Sciatic nerve (tissue), 2 donors: ENCODE measurements at regions of chr1 and their contacts with region 1.

Region 1: GRCh38 chr1:77143529-77144121 is 75.6 kb downstream of the PIGK start:
- DNase-seq: no peak
- ATAC-seq: no peak

Region 2: DNA sequence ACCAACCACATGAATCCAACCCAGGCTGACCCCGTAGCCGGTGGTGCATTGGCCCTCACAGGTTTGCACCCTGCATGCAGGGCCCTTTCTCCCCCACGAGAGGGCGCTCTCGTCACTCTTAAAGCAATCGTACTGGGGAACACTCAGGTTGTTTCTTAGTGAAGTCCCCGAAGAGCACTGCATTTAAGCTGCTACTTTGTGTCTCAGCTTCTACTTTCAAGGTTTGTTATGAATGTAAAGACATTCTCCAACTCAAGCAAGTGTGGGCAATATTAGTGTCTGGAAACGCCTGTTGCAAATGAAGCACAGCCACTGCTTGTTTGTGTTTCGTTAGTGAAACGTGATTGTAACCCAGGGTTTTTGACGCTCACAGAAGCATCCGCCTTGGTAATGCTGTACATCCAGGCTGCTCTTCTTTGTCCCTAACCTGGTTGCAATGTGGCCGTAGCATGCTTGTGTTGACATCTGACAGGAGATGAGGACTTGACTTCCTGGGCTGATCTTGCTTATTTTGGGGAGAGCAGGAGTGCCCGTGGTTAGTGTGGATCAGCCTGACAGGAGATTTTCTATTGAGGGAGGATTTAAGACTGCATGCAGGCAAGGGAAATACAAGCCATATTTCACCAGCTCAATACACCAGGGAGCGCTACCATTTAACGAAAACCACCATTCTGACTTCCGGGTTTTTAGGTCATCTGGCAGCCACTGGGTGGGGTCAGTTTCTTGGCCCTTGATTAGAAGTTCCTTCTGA is 989.2 kb before region 1 on chr1:
- intact Hi-C with region 1: loop called (anchors 10 kb)
- DNase-seq: peak; percentile 89
- ATAC-seq: peak; percentile 95